Left cardiac atrium (tissue), 4 donors: ENCODE measurements at regions of chr1 and their contacts with region 1.

Region 1: GRCh38 chr1:94926915-94927404 is at the start of gene CNN3:
- DNase-seq: peak; percentile 94
- ATAC-seq: peak; percentile 94 to 95
- total RNA-seq, gene CNN3: 87.7 to 162 TPM

Region 2: GRCh38 chr1:94854458-94855306 is 72.3 kb before region 1 on chr1:
- intact Hi-C with region 1: loop called in 1 of 2 experiments (anchors 2 kb)
- DNase-seq: peak; percentile 88
- ATAC-seq: peak; percentile 92 to 95

Region 3: DNA sequence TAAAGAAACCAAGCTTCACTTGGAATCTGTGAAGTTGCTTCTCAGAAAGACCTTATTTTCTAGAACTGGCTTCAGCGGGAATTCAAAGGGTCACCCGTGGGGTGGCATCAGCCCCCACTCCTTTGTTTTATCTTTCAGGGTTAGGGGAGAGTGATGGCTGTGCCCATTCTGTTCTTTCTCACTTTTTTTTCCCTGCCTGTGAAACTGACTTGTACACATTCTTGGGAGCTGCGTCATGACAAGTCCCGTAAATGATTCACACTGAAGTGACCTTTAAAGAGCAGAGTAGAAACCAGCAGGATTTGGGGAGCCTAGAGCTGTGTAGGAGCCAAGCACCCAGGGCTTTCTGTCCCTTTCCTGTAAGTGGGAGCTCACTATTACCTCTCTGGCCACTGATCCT is 63.0 kb before region 1 on chr1:
- intact Hi-C with region 1: loop called in 1 of 2 experiments (anchors 10 kb)
- DNase-seq: peak; percentile 58
- ATAC-seq: peak; percentile 75 to 91

Region 4: DNA sequence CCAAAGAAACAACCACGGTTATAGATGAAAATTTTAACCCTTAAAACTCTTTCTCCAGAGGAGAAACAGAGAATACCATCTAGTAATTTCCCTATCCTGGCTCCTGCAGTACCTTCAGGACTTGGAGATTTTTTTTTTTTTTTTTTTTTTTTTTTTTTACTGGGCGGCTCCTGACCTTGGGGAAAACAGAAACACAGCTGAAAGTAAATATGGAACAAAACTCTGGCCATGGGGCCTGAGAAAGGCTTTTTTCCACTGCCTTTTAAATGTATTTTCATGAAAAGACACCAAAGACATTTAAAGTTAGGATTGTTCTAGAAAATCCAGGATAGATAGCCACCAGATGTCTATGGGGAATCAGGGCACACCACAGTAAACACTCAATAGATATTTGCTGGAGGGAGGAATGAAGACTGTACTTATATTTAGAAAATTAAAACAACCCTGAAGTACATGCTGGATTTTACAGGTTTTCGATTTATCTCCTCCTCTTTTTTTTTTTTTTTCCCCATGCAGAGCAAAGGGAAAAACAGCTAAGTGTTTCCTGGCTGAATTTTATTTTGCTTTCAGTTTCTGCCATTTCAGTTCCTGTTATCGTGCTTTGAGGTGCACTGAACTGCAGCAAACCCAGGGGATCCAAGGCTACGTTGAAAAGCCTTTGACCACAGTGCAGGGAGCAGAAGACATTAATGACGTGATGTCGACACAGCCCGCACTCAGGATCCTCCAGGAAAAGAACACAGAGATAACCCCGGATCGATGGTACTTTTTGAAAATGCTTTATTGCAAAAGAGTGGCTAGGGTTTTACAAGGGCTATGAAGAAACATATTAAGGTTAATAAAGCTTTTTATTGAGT is 35.7 kb after region 1 on chr1:
- intact Hi-C with region 1: loop called in 1 of 2 experiments (anchors 5 kb)
- DNase-seq: peak; percentile 26
- ATAC-seq: peak; percentile 73 to 79

Region 5: DNA sequence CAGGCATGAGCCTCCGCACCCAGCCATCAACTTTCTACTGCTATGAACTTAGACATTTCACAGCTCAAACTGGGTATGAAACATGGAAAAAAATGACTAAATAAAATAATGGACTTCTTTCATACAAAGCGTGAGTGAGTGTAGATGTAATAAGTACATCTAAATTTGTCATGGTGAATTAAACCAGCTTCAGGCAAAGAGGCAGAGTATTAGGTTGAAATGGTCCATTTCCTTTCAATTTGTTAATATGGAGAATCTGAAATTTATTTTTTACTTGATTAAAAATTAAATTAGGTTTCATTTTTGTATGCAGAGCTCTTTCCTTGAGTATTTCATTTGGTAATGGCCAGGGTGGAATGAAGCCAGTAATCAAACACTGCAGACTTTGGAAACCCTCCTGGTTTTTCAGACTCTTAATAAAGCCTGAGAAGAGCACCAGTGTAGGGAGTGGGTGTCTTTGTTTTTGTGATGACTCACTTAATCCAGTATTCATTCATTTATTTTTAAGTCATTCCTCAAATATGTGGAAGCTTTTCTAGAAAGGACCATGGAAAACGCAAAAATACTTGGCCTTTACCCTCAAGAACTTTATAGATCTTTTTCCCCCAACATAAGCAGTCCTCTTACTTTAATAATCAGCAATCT is 96.6 kb after region 1 on chr1:
- intact Hi-C with region 1: loop called in 1 of 2 experiments (anchors 5 kb)
- DNase-seq: no peak
- ATAC-seq: peak; percentile 73 to 87

Region 6: DNA sequence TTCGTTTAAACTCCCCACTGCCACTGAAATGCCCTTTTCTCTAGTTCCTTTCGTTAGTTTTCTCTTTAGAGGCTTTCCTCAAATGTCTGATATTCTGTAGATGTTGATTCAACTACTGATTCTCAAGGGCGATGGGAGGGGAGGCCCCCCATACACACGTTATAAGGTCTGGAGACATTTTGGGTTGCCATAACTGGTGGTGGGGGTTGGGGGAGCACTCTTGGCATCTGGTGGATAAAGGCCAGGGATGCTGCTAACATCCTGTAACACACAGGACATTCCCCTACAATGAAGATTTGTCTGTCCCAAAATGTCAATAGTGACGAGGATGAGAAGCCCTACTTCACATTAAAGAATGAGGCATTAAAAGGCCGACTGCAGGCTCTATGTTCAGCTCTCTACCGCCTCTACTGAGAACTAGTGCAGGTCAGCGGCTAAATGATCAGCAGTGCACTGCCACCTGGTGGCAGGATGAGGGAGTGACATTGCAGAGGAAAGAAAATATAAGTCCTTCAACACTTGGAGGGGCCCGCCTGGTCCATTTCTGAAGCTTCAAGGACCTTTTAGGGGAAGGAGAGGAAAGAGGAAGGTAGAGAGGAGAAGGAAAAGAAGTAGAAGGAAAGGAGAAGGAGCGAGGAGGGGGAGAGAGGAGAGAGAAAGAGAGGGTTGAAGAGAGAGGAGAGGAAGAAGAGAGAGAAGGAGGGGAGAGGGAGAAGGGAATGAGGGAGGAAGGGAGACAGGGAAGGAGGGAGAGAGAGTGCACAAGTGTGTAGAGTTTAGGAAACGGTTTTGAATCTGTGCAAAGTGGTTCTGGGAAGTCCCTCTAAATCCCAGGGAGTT is 116.4 kb after region 1 on chr1:
- intact Hi-C with region 1: loop called in 1 of 2 experiments (anchors 5 kb)
- DNase-seq: peak; percentile 78
- ATAC-seq: peak; percentile 84 to 89